IMR-90 (cell line): ENCODE measurements at regions of chr2 and their contacts with region 1.

Region 1: DNA sequence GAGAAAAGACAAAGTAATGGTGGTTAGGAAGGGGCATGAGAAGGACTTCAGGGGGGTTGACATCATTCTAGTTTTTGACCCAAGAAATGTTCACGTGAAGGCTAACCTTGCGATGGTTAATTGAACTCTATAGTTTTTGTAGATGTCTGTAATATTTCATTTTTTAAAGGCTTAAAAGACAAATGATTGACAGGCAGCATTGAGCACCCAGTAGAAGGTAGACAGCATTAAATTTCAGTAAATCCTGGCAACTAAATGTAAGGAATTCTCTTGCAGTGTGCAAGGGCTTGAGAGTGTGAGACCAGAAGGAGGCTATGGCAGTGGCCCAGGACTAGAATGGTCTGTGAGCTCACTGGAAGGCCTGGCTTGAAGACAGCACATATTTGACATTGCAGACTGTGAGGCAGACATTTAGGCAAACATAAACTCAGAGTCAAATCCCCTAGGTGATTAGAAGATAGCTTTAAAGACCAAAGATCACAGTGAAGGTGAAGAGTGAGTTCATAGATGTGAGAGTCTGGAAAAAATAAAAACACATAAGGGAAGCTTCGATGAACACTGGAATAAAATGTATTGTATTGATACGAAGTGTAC is 100.1 kb upstream of the MAP4K4 start:
- DNase-seq: peak; percentile 75
- ATAC-seq: peak; percentile 74
- H3K4me3 ChIP-seq: no peak overlapping the region
- H3K27ac ChIP-seq: no peak overlapping the region
- H3K4me1 ChIP-seq: no peaks in the 10 kb centered on the region
- H3K27me3 ChIP-seq: peaks cover 5% of the 10 kb centered on the region
- CTCF ChIP-seq: no peak
- POLR2A ChIP-seq: no peak
- RAD21 ChIP-seq: no peak

Region 2: DNA sequence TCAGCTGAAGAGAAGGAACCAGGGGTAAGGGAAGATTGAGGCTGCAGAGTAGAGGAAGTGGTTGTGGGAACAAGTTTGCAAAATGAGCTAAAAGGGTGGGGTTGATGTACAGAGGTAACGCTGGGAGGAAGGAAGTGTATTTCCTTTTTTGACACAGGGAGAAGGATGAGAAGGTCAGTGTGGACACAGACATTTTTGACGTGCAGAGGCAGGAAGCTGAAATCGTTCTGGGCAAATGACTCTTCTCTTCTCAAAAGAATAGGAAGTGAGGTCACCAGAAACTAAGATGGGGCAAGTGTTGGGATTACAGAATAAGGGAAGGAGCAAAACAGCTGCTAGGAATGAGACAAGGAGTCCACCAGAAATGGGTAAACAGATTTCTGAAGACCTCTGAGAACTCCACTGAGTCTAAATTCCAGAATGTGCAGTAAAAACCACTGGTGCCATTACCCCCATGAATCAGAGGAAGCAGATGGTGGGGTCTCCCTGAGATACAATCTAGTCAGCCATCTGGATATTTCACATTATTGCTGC is 268.9 kb before region 1 on chr2:
- CTCF ChIA-PET with region 1: no interaction called
- POLR2A ChIA-PET with region 1: no interaction called
- dilution Hi-C with region 1: no loop called
- in situ Hi-C with region 1: no loop called
- intact Hi-C with region 1: no loop called
- DNase-seq: peak; percentile 87
- ATAC-seq: peak; percentile 24; the same call in 1 of the 2 replicates
- H3K4me3 ChIP-seq: no peak overlapping the region
- H3K27ac ChIP-seq: no peak overlapping the region
- H3K4me1 ChIP-seq: no peaks in the 10 kb centered on the region
- H3K27me3 ChIP-seq: no peaks in the 10 kb centered on the region
- CTCF ChIP-seq: no peak
- POLR2A ChIP-seq: no peak
- RAD21 ChIP-seq: no peak

Region 3: DNA sequence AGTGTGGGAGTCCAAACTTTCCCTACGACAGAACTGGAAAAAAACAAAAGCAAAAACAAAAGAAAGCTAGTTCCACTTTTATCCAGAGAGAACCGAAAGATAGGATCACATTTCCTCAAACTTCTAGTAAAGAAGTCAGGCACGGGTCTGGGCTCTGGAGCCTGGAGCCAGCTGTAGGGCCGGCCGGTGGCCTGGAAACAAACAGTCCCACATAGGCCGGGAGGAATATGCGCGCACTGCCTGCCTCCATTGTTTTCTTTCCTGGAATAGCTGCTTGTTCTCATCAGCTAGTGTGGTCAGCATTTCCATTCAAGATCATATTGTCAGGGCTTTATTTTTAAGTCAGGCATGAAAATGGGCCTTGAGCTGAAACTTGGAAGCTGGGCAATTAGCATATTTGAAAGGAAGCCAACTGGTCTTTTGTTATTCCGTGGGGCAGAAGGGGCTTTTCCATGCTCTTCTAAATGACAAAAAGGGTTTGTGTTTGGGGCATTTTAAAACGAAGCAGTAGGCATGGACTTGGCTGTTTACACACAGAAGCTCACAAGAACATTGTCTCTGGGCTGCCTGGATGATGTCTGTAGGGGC is 63.8 kb before region 1 on chr2:
- CTCF ChIA-PET with region 1: no interaction called
- POLR2A ChIA-PET with region 1: no interaction called
- dilution Hi-C with region 1: no loop called
- in situ Hi-C with region 1: loop called (anchors 10 kb)
- intact Hi-C with region 1: no loop called
- DNase-seq: no peak
- ATAC-seq: no peak
- H3K4me3 ChIP-seq: no peak overlapping the region
- H3K27ac ChIP-seq: no peak overlapping the region
- H3K4me1 ChIP-seq: no peaks in the 10 kb centered on the region
- H3K27me3 ChIP-seq: no peaks in the 10 kb centered on the region
- CTCF ChIP-seq: no peak
- POLR2A ChIP-seq: no peak
- RAD21 ChIP-seq: no peak